Gastrocnemius medialis (tissue), 4 donors: ENCODE measurements at regions of chr11 and their contacts with region 1.

Region 1: DNA sequence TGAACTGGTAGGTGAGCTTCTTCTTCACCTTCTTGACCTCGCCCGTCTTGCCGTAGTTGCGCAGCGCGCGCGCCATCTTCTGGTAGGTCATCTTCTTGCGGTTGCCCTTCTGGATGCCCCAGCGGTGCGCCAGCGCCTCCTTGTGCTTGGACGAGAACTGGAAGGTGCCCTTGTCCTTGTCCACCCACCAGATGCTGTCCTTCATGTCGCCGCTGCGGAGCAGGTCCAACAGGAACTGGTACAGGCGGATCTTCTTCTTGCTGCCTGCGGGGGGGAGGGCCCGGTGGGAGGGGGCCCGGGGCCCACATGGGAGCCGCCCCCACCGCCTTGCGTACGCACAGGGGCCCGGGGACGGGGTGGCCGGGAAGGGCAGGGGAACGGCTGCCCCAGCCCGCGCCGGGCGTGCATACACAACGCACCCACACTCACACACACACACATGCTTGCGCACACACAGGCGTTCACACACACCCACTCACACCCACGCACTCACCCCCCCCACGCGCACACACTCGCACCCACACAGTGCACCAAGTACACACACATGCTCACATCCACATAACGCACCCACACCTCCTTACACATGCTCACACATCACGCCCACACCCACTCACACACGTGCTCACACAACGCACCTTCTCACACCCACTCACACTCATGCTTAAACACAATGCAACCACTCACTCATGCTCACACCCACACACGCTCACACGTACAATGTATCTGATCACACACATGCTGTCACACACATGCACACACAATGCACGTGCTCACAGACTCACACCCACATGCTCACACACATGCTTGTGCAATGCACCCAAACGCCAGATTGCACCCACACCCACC is 3.0 kb upstream of the MYBPC3 start:
- DNase-seq: peak; percentile 93 to 97
- ATAC-seq: peak; percentile 94 to 97
- H3K4me3 ChIP-seq: peak overlapping the region; percentile 53 to 70 (median 60)
- H3K27ac ChIP-seq: peak overlapping the region; percentile 80 to 92 (median 85)
- H3K4me1 ChIP-seq: peaks cover 10 to 11% of the 10 kb centered on the region in 2 donors
- H3K27me3 ChIP-seq: no peaks in the 10 kb centered on the region
- CTCF ChIP-seq: peak; percentile 92 to 98 (median 96)
- POLR2A ChIP-seq: no peak

Region 2: GRCh38 chr11:46889689-46890475 is 465.6 kb before region 1 on chr11:
- in situ Hi-C with region 1: loop called in 2 of 4 experiments (anchors 25 kb)
- intact Hi-C with region 1: loop called (anchors 2 kb)
- DNase-seq: peak; percentile 35 to 64
- ATAC-seq: peak; percentile 85 to 94
- H3K4me3 ChIP-seq: no peak overlapping the region
- H3K27ac ChIP-seq: no peak overlapping the region
- H3K4me1 ChIP-seq: peaks cover under 1 to 1% of the 10 kb centered on the region in 2 donors
- H3K27me3 ChIP-seq: no peaks in the 10 kb centered on the region
- CTCF ChIP-seq: peak; percentile 84 to 91 (median 86)
- POLR2A ChIP-seq: no peak

Region 3: DNA sequence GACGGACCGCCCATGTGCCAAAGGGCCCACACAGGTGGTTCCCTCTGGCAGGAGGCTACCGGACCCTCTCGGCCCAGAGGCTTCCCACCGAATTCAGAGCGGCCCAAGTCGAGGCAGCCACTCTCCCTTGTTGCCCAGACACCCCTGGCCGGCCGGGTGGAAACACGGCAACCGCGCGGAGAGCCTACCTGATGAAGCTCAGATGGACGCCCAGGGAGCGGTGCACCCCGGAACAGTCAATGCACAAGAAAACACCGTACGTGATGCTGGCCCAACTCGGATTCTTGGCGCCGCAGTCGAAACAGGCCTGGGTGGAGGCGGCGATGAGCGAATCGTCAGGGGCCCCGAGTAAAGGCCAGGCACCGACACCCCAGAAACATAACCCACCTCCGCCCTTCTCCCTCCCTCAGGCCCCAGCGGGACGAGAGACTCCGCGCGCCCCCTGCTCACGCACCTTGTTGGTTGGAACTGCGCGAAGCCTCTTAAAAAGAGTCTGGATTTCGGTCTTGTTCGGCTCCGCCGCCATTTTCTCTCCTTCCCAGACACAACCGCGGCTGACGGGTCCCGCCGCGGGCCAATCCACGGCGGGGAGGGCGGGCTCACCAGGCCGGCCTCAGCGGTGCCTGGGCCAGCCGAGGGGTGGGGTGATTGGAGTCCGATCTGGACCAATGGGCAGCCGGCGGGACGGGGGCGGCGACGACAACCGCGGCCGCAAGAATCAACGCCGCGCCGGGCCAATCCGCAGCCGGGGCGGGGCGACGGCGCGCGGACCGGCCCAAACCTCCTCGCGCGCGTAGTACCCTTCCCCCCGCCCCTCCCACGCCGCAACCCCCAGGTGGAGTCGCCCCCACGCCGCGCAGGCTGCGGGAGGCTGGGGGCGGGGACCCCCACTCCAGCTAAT is 178.9 kb before region 1 on chr11 and contains the start of gene ARFGAP2:
- in situ Hi-C with region 1: loop called in 1 of 4 experiments (anchors 10 kb)
- intact Hi-C with region 1: loop called (anchors 1 kb)
- DNase-seq: peak; percentile 96 to 97
- ATAC-seq: peak; percentile 75 to 78
- H3K4me3 ChIP-seq: peak within 1 kb of the TSS; percentile 83 to 93 (median 89)
- H3K27ac ChIP-seq: peak within 1 kb of the TSS; percentile 97 to 99 (median 98)
- H3K4me1 ChIP-seq: peaks cover 69 to 71% of the 10 kb centered on the region in 2 donors
- H3K27me3 ChIP-seq: no peaks in the 10 kb centered on the region
- CTCF ChIP-seq: no peak
- POLR2A ChIP-seq: peak; percentile 43 to 62
- total RNA-seq, gene ARFGAP2: 120 to 165 (median 142) TPM

Region 4: DNA sequence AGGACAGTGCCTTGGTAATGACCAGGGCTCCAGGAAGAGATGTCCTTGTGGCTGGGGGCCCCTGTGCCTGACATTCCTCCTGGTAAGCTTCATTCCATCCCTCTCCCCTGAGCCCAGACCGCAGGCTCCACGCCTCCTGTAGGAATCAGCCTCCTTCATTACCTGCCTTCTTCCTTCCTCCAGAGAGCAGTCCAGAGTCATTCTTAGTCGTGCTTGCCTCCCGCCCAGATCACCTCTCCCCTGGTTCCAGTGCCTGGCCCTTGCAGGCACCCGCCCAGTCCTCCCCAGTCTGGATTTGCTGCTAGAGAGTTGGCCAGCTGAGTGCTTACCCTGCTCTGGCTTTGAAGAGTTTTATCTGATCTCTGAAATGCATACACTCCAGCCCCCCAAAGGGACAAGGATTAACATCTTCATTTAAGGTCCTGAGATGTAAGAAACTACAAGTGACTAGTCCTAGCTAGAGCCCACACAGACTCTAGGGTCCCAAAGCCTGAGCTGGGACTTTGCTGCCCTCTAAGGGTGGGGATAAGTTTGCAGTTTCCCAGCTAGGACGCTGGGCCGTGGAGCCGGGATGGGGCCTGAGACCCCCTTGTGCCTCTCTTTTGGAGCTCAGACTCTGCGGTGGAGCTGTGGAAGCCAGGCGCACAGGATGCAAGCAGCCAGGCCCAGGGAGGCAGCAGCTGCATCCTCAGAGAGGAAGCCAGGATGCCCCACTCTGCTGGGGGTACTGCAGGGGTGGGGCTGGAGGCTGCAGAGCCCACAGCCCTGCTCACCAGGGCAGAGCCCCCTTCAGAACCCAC is 96.1 kb before region 1 on chr11:
- in situ Hi-C with region 1: loop called in 1 of 4 experiments (anchors 10 kb)
- intact Hi-C with region 1: loop called (anchors 1 kb)
- DNase-seq: no peak
- ATAC-seq: peak; percentile 21 to 54
- H3K4me3 ChIP-seq: peak overlapping the region in 1 of 4 donors; percentile 51
- H3K27ac ChIP-seq: peak overlapping the region; percentile 7 to 80 (median 75)
- H3K4me1 ChIP-seq: peaks cover 43 to 48% of the 10 kb centered on the region in 2 donors
- H3K27me3 ChIP-seq: no peaks in the 10 kb centered on the region
- CTCF ChIP-seq: peak; percentile 20 to 71 (median 57)
- POLR2A ChIP-seq: no peak

Region 5: GRCh38 chr11:47329987-47330931 is 25.2 kb before region 1 on chr11:
- in situ Hi-C with region 1: no loop called
- intact Hi-C with region 1: loop called (anchors 1 kb)
- DNase-seq: peak; percentile 43 to 78
- ATAC-seq: peak; percentile 93 to 94
- H3K4me3 ChIP-seq: no peak overlapping the region
- H3K27ac ChIP-seq: peak overlapping the region; percentile 67 to 82 (median 72)
- H3K4me1 ChIP-seq: peaks cover 30 to 34% of the 10 kb centered on the region in 2 donors
- H3K27me3 ChIP-seq: no peaks in the 10 kb centered on the region
- CTCF ChIP-seq: peak in 3 of 5 experiments; percentile 9 to 16 (median 13)
- POLR2A ChIP-seq: no peak